Ovary (tissue), 10 donors: ENCODE measurements at regions of chr6 and their contacts with region 1.

Region 1: GRCh38 chr6:29016559-29017427 is 11.7 kb upstream of the ZNF311 start:
- DNase-seq: peak; percentile 72 to 87 (median 82)
- H3K4me3 ChIP-seq: peak overlapping the region; percentile 42
- H3K27ac ChIP-seq: peak overlapping the region in 1 of 2 donors; percentile 54
- H3K4me1 ChIP-seq: peaks cover 4% of the 10 kb centered on the region
- H3K27me3 ChIP-seq: no peaks in the 10 kb centered on the region
- CTCF ChIP-seq: peak; percentile 61 to 78 (median 75)
- EP300 ChIP-seq: no peak
- POLR2A ChIP-seq: no peak

Region 2: DNA sequence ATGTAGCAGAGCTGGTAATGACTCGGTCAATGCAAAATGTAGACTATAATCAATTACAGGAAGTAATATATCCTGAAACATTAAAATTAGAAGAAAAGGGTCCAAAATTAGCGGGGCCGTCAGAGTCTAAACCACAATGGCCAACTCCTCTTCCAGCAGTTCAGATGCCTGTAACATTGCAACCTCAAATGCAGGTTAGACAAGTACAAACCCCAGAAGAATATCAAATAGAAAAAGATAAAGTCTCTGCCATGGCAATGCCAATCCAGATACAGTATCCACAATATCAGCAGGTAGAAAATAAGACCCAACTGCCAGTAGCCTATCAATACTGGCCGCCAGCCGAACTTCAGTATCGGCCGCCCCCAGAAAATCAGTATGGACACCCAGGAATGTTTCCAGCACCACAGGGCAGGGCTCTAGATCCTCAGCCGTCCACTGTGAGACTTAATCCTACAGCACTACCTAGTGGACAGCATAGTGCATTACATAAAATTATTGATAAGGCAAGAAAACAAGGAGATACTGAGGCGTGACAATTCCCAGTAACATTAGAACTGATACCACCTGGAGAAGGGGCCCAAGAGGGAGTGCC is 332.8 kb before region 1 on chr6:
- intact Hi-C with region 1: loop called in 2 of 4 experiments (anchors 5 to 10 kb)
- DNase-seq: no peak
- H3K4me3 ChIP-seq: no peak overlapping the region
- H3K27ac ChIP-seq: no peak overlapping the region
- H3K4me1 ChIP-seq: no peaks in the 10 kb centered on the region
- H3K27me3 ChIP-seq: no peaks in the 10 kb centered on the region
- CTCF ChIP-seq: no peak
- EP300 ChIP-seq: no peak
- POLR2A ChIP-seq: no peak

Region 3: DNA sequence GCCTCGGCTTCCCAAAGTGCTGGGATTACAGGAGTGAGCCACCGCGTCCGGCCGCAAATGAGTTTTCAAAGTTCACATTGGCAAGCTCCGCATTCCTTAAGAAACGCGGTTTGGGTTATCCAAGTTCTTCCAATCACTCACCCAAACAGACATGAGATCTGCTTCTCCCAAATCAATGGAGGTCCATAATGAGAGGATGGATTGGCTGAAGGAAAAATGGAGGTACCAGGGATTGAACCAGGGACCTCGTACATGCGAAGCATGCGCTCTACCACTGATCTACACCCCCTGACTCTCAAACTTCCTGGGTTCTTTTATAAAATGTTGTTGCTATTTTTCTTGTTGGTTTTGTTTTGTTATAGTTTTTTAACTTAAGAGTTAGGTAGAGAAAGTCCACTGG is 321.1 kb before region 1 on chr6:
- intact Hi-C with region 1: loop called in 1 of 4 experiments (anchors 10 kb)
- DNase-seq: no peak
- H3K4me3 ChIP-seq: no peak overlapping the region
- H3K27ac ChIP-seq: peak overlapping the region in 1 of 2 donors; percentile 22
- H3K4me1 ChIP-seq: no peaks in the 10 kb centered on the region
- H3K27me3 ChIP-seq: no peaks in the 10 kb centered on the region
- CTCF ChIP-seq: no peak
- EP300 ChIP-seq: no peak
- POLR2A ChIP-seq: no peak

Region 4: DNA sequence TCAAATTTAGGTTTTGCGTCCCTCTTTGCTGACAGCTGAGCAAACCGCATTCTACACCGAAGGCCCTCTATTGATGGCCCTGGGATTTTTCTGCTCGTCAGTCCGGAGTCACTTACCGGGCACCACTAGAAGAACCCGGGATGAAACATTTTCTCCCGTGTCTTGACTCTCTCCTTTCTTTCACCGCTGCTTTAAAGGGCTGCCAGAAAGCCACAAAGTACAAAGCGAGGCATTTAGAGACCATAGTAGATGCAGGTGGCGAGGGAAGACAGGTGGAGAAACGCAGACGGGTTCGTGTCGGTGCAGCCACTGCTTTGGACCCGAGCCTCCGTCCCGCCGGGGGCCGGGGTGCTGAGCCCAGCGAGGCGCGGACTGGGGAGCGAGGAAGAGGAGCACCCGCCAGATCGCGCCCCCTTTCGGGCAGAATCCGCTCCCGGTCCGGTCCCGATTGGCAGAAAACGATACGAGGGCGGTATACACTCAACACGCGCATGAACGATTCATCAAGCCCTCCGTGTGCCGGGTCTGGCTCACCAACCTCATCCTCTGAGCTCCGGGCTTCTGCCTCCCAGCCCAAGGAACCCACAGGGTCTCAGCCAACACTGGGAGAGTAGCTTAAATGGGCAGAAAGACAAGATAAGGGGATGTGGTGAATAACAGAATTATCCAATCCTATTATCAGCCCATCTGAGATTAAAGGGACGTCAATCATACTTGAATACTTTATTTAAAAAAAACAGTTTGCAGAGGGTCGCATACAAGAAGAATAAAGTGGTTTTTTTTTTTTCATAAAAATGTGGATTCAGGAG is 178.0 kb before region 1 on chr6:
- intact Hi-C with region 1: loop called (anchors 2 to 10 kb)
- DNase-seq: peak; percentile 85 to 91 (median 87)
- H3K4me3 ChIP-seq: peak overlapping the region; percentile 54
- H3K27ac ChIP-seq: peak overlapping the region; percentile 46 to 54
- H3K4me1 ChIP-seq: peaks cover 1% of the 10 kb centered on the region
- H3K27me3 ChIP-seq: no peaks in the 10 kb centered on the region
- CTCF ChIP-seq: peak; percentile 48 to 61 (median 54)
- EP300 ChIP-seq: no peak
- POLR2A ChIP-seq: no peak

Region 5: DNA sequence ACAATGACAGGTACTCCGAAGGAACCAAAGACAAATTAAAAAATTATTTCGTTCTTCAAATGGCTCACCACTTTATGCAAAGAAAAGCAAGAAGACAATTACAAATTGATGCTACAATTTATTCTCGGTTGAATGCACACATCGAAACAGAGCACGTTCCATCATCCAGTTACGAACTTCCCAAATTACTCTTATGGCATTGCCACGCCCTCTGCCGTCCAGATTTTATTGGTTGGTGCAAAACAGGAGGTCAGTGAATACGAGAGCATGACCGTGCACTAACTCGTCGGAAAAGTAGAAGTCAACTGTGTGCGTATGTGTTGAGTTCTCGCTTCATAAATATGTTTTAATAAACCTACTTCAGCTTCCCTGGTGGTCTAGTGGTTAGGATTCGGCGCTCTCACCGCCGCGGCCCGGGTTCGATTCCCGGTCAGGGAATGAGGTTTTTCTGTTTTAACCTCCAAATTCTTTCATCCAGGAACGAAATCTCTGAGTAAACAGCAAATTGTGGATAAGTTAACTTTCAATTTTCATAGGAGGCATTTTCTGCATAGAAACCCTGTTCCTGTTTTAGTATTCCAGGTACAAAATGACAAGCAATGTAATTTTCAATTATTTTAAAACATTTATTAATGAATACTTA is 34.8 kb before region 1 on chr6:
- intact Hi-C with region 1: no loop called
- DNase-seq: peak; percentile 70 to 90 (median 83)
- H3K4me3 ChIP-seq: peak overlapping the region; percentile 69
- H3K27ac ChIP-seq: peak overlapping the region in 1 of 2 donors; percentile 71
- H3K4me1 ChIP-seq: peaks cover 3% of the 10 kb centered on the region
- H3K27me3 ChIP-seq: no peaks in the 10 kb centered on the region
- CTCF ChIP-seq: peak in 1 of 3 donors; percentile 22
- EP300 ChIP-seq: no peak
- POLR2A ChIP-seq: no peak